ENCODE measurements at regions of chr13 and their contacts with region 1.

Region 1: GRCh38 chr13:51668580-51669195 is 84.4 kb downstream of the WDFY2 start:
- DNase-seq: peak; percentile 80
- ATAC-seq: peak; percentile 72
- H3K4me3 ChIP-seq: peak overlapping the region in 2 of 3 experiments; percentile 1 to 13; a peak in 1 of 6 replicates
- H3K27ac ChIP-seq: peak overlapping the region; percentile 71
- H3K4me1 ChIP-seq: peaks cover 95% of the 10 kb centered on the region
- H3K27me3 ChIP-seq: no peaks in the 10 kb centered on the region
- CTCF ChIP-seq: no peak
- EP300 ChIP-seq: peak in 1 of 2 experiments; percentile 85; a peak in 2 of 4 replicates
- POLR2A ChIP-seq: no peak
- RAD21 ChIP-seq: no peak

Region 2: DNA sequence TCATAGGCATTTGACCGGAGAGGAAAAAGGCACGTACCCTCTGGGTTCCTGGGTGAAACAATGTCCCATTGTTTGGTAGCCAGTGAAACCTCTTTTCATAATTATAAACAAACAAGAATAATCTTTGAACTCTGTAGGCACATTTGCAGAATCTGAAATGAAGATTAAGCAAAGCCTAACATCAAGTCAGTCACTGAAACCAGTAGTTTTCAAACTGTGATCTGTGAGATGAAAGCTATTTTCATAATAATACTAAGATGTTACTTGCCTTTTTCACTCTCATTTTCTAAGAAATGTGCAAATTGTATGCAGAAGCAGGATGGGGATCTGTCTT is 20.9 kb after region 1 on chr13:
- CTCF ChIA-PET with region 1: no interaction called
- POLR2A ChIA-PET with region 1: no interaction called
- in situ Hi-C with region 1: no loop called
- intact Hi-C with region 1: loop called (anchors 2 kb)
- DNase-seq: peak; percentile 94
- ATAC-seq: peak; percentile 98
- H3K4me3 ChIP-seq: peak overlapping the region in 2 of 3 experiments; percentile 27 to 44; a peak in 2 of 6 replicates
- H3K27ac ChIP-seq: peak overlapping the region; percentile 83
- H3K4me1 ChIP-seq: peaks cover 40% of the 10 kb centered on the region
- H3K27me3 ChIP-seq: no peaks in the 10 kb centered on the region
- CTCF ChIP-seq: no peak
- EP300 ChIP-seq: peak in 1 of 2 experiments; percentile 81; a peak in 3 of 4 replicates
- POLR2A ChIP-seq: no peak
- RAD21 ChIP-seq: no peak